AG04449 (cell line): ENCODE measurements at regions of chr14 and their contacts with region 1.

Region 1: GRCh38 chr14:71753126-71753830 is 179.0 kb upstream of the RGS6 start:
- DNase-seq: peak; percentile 26
- H3K4me3 ChIP-seq: no peak overlapping the region
- CTCF ChIP-seq: peak; percentile 91

Region 2: GRCh38 chr14:71138448-71139293 is 614.6 kb before region 1 on chr14:
- CTCF ChIA-PET with region 1: interaction called, 207 read pairs
- POLR2A ChIA-PET with region 1: no interaction called
- DNase-seq: no peak
- H3K4me3 ChIP-seq: no peak overlapping the region
- CTCF ChIP-seq: peak; percentile 91

Region 3: GRCh38 chr14:71711619-71712018 is 41.7 kb before region 1 on chr14:
- CTCF ChIA-PET with region 1: interaction called, 224 read pairs
- POLR2A ChIA-PET with region 1: no interaction called
- DNase-seq: peak; percentile 96
- H3K4me3 ChIP-seq: no peak overlapping the region
- CTCF ChIP-seq: no peak

Region 4: DNA sequence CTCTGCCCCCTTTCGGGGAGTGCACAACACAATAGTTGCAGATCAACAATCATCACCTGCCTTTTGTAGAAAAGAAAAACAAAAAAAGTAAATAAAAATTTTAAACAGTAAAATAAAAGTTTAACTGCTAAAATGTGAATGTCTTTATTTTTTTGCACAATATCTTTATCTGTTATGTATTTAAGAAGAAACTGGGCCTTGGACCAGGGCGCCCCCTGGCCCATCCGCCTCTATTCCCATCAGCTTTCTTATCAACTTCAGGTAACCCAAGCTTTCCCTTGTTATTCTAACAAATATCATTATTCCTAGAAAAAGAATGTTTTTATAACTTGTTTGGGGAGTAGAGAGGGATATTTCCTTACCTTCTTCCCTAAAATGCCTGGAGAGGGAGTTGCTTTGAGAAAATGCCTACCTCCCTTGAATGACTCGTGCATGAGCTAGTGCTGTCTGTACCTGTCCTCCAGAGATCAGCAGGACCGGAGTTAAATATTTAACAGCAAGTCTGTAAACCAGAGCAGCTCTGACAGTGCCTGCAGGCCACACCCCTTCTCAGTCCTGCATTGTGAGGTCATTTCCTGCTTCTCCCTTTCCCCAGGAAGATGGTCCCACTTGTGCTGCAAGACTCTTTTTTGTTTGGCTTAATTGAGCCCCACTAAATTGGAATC is 13.9 kb before region 1 on chr14:
- CTCF ChIA-PET with region 1: interaction called, 224 read pairs
- POLR2A ChIA-PET with region 1: no interaction called
- DNase-seq: no peak
- H3K4me3 ChIP-seq: no peak overlapping the region
- CTCF ChIP-seq: no peak